ENCODE measurements at regions of chr17 and their contacts with region 1.

Region 1: DNA sequence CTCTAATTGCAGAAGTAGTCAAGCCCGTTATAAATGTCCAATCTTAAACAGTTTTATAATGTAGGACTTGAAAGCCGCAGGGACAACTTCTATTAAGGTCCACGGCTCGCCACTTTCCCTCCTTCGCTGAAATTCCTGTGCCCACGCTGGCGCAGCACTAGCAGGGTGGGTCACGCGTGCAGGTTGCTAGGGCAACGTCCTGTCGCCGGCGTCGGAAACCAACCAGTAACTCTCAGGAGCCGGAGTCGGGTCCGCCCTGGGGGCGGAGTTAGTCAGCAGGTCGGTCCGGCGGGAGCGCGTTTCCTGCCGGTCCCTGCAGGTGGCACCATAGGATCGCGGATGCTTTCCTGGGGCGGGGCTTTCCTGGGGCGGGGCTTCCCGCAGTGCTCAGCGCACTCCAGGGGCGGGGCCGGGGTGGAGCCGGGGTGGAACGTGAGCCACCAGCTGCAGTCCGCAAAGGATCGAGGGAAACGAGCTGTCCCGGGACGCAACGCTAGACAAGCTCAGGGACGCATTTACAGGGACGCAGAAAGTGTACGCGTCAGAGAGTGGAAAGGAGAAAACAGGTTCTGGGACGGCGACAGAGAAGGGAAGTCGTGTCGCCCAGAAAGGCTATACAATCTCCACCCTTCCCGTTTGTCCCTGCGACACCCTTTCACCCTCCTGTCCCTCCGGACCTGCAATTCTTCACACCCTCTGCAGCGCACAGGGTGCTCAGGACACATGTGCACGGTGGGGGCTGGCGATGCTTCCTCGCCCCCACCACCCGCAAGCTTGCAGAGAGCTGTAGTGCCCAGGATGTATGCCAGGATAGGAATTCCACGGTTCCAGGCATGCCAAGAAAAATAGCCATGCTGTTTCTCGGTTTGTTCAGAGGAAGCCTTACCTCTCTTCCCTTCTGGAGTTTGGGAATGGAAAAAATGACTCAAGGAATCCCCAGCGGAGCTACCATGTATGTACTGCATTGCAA is 12.4 kb downstream of the COPZ2 start:
- DNase-seq: peak; percentile 95 to 96
- ATAC-seq: peak; percentile 82 to 84
- H3K4me3 ChIP-seq: peak overlapping the region; percentile 57 to 66 (median 60)
- H3K27ac ChIP-seq: peak overlapping the region; percentile 77 to 89 (median 81)
- H3K4me1 ChIP-seq: peaks cover 33 to 39% of the 10 kb centered on the region in 2 donors
- H3K27me3 ChIP-seq: no peaks in the 10 kb centered on the region
- CTCF ChIP-seq: peak; percentile 69 to 93 (median 90)
- POLR2A ChIP-seq: peak; percentile 38 to 60

Region 2: GRCh38 chr17:47949136-47949759 is 76.0 kb before region 1 on chr17:
- in situ Hi-C with region 1: no loop called
- intact Hi-C with region 1: loop called (anchors 2 kb)
- DNase-seq: peak; percentile 59 to 67
- ATAC-seq: peak; percentile 57 to 65
- H3K4me3 ChIP-seq: peak overlapping the region; percentile 31 to 51 (median 43)
- H3K27ac ChIP-seq: peak overlapping the region; percentile 74 to 77 (median 76)
- H3K4me1 ChIP-seq: peaks cover 25 to 28% of the 10 kb centered on the region in 2 donors
- H3K27me3 ChIP-seq: no peaks in the 10 kb centered on the region
- CTCF ChIP-seq: peak; percentile 81 to 93 (median 91)
- POLR2A ChIP-seq: no peak

Region 3: DNA sequence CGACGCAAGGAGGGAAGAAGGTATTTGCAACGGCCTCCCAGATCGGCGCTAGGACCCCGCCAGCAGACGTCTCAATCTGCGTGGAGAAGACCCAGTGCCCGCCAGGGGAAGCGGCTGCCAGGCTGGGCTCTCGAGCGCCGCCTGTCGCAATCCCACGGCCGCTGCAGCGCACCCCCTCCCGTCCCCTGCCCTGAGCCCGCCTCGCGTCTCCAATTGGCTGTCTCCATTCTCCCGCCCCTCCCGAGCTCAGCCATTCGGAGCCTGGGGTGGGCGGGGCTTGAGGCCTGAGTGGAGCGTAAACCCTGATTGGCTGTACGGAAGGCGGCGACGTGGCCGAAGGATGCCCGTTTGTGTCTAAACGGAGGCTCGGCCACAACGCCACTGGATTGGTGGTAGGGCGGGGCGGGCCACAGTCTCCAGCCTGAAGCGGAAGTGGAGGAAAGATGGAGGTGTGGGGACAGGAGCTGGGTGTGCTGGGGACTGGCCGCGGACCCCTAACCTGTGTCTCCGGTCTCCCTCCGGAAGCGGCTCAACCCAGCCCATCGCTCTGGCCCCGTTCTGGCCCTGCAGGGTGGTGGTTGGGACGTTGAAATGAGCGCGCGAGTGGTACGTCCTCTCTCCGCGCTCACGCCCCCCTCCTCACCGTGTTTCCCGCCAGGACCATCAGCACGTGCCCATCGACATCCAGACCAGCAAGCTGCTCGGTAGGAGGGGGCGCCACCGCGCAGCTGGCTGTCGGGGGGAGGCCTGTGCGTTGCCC is 54.3 kb before region 1 on chr17 and contains the start of gene CDK5RAP3:
- in situ Hi-C with region 1: no loop called
- intact Hi-C with region 1: loop called (anchors 2 kb)
- DNase-seq: peak; percentile 100
- ATAC-seq: peak; percentile 98 to 99
- H3K4me3 ChIP-seq: peak within 1 kb of the TSS; percentile 77 to 100 (median 90)
- H3K27ac ChIP-seq: peak within 1 kb of the TSS; percentile 85 to 89 (median 88)
- H3K4me1 ChIP-seq: peaks cover 6 to 18% of the 10 kb centered on the region in 2 donors
- H3K27me3 ChIP-seq: no peaks in the 10 kb centered on the region
- CTCF ChIP-seq: peak; percentile 95 to 96 (median 96)
- POLR2A ChIP-seq: peak; percentile 71 to 74
- total RNA-seq, gene CDK5RAP3: 14.2 to 35.9 (median 27.8) TPM

Region 4: DNA sequence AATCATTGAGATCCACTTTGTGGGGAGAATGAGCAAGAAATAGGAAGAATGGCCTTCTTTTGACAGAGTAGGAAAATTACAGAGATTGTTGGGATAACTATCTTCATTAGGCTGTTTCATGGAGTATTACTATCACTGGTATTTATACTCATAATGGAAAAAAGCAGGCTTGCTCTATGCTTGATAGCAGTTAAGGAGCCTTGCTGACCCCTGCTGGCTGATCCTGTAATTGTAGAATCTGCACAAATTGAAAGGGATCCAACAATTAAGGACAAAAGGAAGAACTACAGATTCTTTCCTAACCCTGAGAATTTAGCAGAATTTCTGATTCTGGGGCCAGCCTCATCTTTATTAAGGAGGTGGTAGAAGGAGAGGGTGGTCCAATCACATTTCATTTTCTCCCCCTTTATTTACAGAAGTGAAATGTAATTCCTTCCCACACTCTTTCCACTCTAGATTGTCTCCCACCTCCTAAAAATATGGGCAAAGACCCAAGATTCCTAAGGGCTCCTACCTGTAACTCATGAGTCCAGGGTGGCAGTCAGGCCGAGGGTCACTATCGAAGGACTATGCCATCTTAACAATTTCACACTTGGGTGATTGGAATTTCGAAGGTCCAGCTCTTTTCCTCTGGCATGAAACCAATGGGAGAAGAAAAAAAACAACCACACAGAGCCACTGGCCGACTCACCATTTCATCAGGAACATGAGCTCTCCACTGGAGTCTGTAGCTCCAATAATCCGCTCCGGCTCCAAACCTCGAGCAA is 49.3 kb after region 1 on chr17:
- in situ Hi-C with region 1: loop called (anchors 5 kb)
- intact Hi-C with region 1: loop called (anchors 1 kb)
- DNase-seq: peak; percentile 56 to 79
- ATAC-seq: peak; percentile 68 to 80
- H3K4me3 ChIP-seq: no peak overlapping the region
- H3K27ac ChIP-seq: peak overlapping the region; percentile 68 to 97 (median 82)
- H3K4me1 ChIP-seq: peaks cover 6 to 14% of the 10 kb centered on the region in 2 donors
- H3K27me3 ChIP-seq: no peaks in the 10 kb centered on the region
- CTCF ChIP-seq: peak; percentile 83 to 97 (median 86)
- POLR2A ChIP-seq: no peak

Region 5: DNA sequence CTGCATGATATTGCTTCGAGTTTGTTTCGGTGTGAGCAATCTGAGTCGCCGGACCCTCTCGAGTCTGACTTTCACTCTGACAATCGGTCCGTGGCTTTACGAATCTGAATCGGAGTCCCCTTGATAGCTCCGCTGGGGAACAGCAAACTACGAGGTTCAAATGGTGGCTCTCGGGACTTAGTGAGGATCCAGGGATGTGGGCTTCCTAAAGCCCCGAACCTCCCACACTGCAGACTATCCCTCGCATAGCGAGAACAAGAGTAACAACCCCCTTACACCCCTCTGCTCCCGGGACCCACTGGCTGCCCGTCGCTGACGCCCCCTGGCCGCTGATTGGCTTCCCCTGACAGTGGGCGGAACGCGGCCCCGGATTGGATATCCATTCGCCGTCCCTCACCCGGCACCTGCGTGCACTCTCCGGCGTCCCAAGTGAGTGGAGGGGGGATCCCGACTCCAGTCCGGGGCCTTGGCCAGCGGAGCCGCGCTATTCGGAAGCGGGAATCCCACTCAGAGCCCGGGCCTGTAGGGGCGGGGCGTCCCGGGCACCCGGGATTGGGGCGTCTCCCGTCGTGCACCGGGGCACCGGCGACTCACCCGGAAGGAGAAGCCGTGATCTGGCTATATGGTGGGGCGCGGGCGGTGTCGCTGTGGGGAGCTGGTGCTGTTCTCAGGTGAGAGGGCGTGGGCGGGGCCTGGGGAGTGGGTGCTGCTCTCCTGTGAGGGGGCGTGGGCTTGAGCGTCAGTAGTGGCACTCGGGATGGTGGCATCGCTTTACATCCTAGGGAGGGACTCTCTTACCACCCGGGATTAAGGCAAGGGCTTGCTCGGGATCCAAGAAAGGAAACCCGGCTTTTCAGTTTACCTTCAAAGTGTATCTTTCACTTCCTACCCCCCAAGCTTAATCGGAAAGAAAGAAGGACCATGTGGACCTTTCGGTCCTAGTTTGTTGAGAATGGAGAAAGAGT is 82.2 kb after region 1 on chr17 and contains the start of gene SNX11:
- in situ Hi-C with region 1: no loop called
- intact Hi-C with region 1: loop called (anchors 1 kb)
- DNase-seq: peak; percentile 81 to 87
- ATAC-seq: peak; percentile 95 to 97
- H3K4me3 ChIP-seq: peak within 1 kb of the TSS; percentile 64 to 99 (median 94)
- H3K27ac ChIP-seq: peak within 1 kb of the TSS; percentile 92 to 100 (median 98)
- H3K4me1 ChIP-seq: peaks cover 14 to 18% of the 10 kb centered on the region in 2 donors
- H3K27me3 ChIP-seq: no peaks in the 10 kb centered on the region
- CTCF ChIP-seq: peak in 2 of 5 experiments; percentile 8 to 22
- POLR2A ChIP-seq: peak; percentile 67 to 70
- total RNA-seq, gene SNX11: 7.3 to 16.3 (median 9.6) TPM

Region 6: GRCh38 chr17:48618256-48618897 is 593.2 kb after region 1 on chr17:
- in situ Hi-C with region 1: no loop called
- intact Hi-C with region 1: loop called (anchors 5 kb)
- DNase-seq: peak; percentile 64 to 76
- ATAC-seq: peak; percentile 89 to 90
- H3K4me3 ChIP-seq: peak overlapping the region in 1 of 4 donors; percentile 8
- H3K27ac ChIP-seq: no peak overlapping the region
- H3K4me1 ChIP-seq: no peaks in the 10 kb centered on the region
- H3K27me3 ChIP-seq: peaks cover 98 to 99% (median 99%) of the 10 kb centered on the region in 3 donors
- CTCF ChIP-seq: peak; percentile 93 to 98 (median 97)
- POLR2A ChIP-seq: no peak